ENCODE measurements at regions of chr11 and their contacts with region 1.

Region 1: DNA sequence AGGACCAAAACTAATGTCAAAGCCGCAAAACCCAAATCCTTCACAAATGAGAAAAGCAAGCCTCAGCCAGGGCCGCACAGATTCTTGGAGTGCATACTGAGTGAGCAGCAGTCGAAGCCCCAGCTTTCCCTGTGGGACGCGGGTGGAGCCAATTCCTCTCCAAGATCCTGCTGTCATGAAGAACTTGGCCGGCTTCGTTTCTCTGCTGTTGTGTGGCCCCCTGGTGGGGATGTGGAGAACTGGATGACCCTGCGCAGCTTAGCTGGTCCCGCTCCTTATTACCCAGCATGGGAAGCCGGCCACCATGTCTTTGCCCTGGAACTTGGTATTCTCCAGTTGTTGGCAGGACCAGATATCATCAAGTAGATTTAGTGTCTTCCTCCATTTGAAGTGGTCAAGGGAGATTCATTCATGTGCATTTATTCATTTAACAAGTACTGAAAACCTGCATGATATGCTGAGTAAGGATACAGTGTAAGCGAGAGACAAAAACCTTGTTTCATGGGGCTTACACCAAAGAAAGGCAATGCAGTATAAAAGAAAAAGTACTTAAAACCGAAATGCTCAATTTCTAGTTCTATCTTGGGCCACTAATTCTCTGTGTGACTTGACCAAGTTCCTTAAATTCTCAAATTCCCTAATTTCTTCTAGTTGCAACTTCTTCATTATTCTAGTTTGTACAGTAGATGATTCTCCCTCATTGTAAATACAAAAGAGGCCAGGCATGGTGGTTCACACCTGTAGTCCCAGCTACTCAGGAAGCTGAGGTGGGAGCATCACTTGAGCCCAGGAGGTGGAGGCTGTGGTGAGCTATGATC is 56.7 kb upstream of the CRTAM start:
- DNase-seq: no peak
- ATAC-seq: peak; percentile 96
- H3K4me3 ChIP-seq: no peak overlapping the region
- H3K27ac ChIP-seq: no peak overlapping the region
- H3K4me1 ChIP-seq: no peaks in the 10 kb centered on the region
- H3K27me3 ChIP-seq: no peaks in the 10 kb centered on the region; a peak in 1 of 4 replicates
- CTCF ChIP-seq: peak; percentile 84 to 91 (median 85)
- EP300 ChIP-seq: no peak
- POLR2A ChIP-seq: no peak
- RAD21 ChIP-seq: peak; percentile 87

Region 2: DNA sequence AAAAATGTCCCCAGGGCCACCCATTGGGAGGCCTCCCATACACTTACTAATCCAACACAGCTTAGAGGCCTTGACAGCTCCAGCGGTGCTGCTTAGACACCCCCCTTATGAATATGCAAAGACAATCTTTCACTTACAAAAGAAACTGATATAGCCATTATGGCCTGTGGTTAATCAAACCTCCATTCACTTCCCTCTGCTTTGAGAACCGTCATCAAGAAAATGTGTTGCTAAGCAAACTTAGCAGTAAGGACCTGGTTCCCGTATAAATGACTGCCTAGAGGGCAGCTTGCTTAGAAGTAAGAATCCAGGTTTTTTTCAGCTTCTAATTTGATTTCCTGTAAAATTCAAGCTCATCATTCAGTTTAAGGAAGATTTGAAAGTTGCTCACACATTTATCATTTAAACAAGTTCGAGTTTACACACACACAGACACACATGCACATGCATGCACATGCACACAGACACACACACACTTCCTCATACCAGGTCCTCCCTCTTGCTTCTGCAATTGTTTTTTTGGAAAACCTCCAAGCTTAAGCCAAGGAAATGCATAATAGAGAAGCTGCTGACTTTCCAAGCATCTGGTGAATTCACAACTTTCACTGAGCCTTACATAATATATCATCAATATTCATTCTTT is 527.9 kb before region 1 on chr11:
- CTCF ChIA-PET with region 1: no interaction called
- POLR2A ChIA-PET with region 1: no interaction called
- RAD21 ChIA-PET with region 1: no interaction called
- SMC1A ChIA-PET with region 1: no interaction called
- in situ Hi-C with region 1: no loop called
- intact Hi-C with region 1: no loop called
- DNase-seq: no peak
- ATAC-seq: no peak
- H3K4me3 ChIP-seq: no peak overlapping the region
- H3K27ac ChIP-seq: no peak overlapping the region
- H3K4me1 ChIP-seq: no peaks in the 10 kb centered on the region
- H3K27me3 ChIP-seq: no peaks in the 10 kb centered on the region; a peak in 1 of 4 replicates
- CTCF ChIP-seq: no peak
- EP300 ChIP-seq: no peak
- POLR2A ChIP-seq: no peak
- RAD21 ChIP-seq: no peak

Region 3: DNA sequence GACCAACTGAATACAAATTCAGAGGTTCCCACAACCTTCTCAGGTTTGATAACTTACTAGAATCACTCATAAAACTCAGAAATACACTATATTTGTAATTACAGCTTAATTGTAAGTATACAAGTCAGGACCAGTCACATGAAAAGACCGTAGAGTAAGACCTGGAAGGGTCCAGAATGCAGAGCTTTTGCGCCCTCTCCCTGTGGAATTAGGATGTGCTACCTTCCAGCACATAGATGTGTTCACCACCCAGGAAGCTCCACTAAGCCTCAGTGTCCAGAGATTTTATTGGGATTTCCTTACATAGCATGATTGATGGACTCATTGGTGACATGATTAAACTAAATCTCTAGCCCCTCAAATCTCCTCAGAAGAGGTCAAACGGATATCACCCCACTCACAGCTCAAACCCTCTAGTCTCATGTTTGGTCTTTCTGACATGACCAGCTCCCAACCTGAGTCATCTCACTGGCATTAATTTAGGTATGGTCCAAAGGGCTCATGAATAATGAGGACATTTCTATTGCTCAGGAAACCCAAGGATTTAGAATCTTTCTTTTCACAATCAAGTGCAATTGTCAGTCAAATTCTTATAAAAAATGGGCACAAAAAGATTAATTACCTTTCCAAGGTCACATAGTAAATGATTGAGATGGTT is 203.3 kb before region 1 on chr11:
- CTCF ChIA-PET with region 1: interaction called, 73 read pairs
- POLR2A ChIA-PET with region 1: no interaction called
- RAD21 ChIA-PET with region 1: interaction called, 8 read pairs
- SMC1A ChIA-PET with region 1: interaction called, 25 read pairs
- in situ Hi-C with region 1: loop called (anchors 5 kb)
- intact Hi-C with region 1: loop called (anchors 1 kb)
- DNase-seq: no peak
- ATAC-seq: no peak
- H3K4me3 ChIP-seq: no peak overlapping the region
- H3K27ac ChIP-seq: no peak overlapping the region
- H3K4me1 ChIP-seq: no peaks in the 10 kb centered on the region
- H3K27me3 ChIP-seq: no peaks in the 10 kb centered on the region
- CTCF ChIP-seq: peak in 1 of 3 experiments; percentile 16; a peak in 1 of 6 replicates
- EP300 ChIP-seq: no peak
- POLR2A ChIP-seq: no peak
- RAD21 ChIP-seq: no peak

Region 4: GRCh38 chr11:122584670-122585069 is 196.9 kb before region 1 on chr11:
- CTCF ChIA-PET with region 1: interaction called, 73 read pairs
- POLR2A ChIA-PET with region 1: no interaction called
- RAD21 ChIA-PET with region 1: interaction called, 8 read pairs
- SMC1A ChIA-PET with region 1: interaction called, 25 read pairs
- in situ Hi-C with region 1: loop called (anchors 5 kb)
- intact Hi-C with region 1: loop called (anchors 1 kb)
- DNase-seq: no peak
- ATAC-seq: no peak
- H3K4me3 ChIP-seq: no peak overlapping the region
- H3K27ac ChIP-seq: no peak overlapping the region
- H3K4me1 ChIP-seq: no peaks in the 10 kb centered on the region
- H3K27me3 ChIP-seq: no peaks in the 10 kb centered on the region
- CTCF ChIP-seq: no peak
- EP300 ChIP-seq: no peak
- POLR2A ChIP-seq: no peak
- RAD21 ChIP-seq: no peak

Region 5: DNA sequence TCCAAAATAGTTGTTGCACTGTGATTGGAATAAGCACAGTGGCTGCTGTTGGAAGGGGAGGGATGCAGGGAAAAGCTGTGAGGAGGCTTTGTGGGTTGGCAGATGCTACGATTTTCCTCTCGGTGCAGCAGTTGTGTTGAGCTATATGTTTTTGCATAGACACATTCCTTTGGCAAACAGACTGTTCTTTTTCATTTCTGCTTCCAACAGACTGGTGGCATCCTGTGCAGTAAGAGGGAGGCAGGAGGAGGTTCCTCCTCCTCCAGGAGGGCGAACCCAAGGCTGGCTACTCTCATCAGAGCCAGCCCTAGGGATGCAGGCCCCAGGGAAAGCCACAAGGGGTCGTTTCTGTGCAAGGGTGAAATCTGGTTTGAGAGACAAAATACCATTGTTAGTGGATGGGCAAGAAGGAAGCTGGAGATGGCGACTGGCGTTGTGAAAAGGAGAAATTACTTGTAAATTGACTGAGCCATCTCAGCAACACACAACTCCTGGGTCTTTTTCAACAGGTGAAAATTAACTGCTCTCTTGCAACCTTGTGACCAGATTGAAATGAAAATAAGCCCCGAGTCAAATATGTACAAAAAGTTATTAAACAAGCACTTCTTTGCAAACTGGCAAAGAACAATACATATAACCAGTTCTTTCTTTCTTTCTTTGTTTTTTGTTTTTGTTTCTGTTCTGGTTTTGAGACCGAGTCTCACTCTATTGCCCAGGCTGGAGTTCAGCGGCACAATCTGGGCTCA is 152.6 kb before region 1 on chr11:
- CTCF ChIA-PET with region 1: interaction called, 78 read pairs
- POLR2A ChIA-PET with region 1: no interaction called
- RAD21 ChIA-PET with region 1: interaction called, 14 read pairs
- SMC1A ChIA-PET with region 1: interaction called, 28 read pairs
- in situ Hi-C with region 1: loop called (anchors 5 kb)
- intact Hi-C with region 1: loop called (anchors 1 kb)
- DNase-seq: no peak
- ATAC-seq: peak; percentile 95
- H3K4me3 ChIP-seq: no peak overlapping the region
- H3K27ac ChIP-seq: no peak overlapping the region
- H3K4me1 ChIP-seq: no peaks in the 10 kb centered on the region
- H3K27me3 ChIP-seq: no peaks in the 10 kb centered on the region; a peak in 2 of 4 replicates
- CTCF ChIP-seq: peak; percentile 76 to 81 (median 80)
- EP300 ChIP-seq: no peak
- POLR2A ChIP-seq: no peak
- RAD21 ChIP-seq: peak; percentile 84

Region 6: GRCh38 chr11:122655527-122656072 is 126.0 kb before region 1 on chr11 and contains the start of gene UBASH3B:
- CTCF ChIA-PET with region 1: interaction called, 12 read pairs
- POLR2A ChIA-PET with region 1: no interaction called
- RAD21 ChIA-PET with region 1: no interaction called
- SMC1A ChIA-PET with region 1: no interaction called
- in situ Hi-C with region 1: no loop called
- intact Hi-C with region 1: no loop called
- DNase-seq: no peak
- ATAC-seq: peak; percentile 93
- H3K4me3 ChIP-seq: peak within 1 kb of the TSS; percentile 82
- H3K27ac ChIP-seq: no peak within 1 kb of the TSS
- H3K4me1 ChIP-seq: peaks cover 6% of the 10 kb centered on the region
- H3K27me3 ChIP-seq: peaks cover 6 to 20% of the 10 kb centered on the region in 2 experiments
- CTCF ChIP-seq: no peak
- EP300 ChIP-seq: no peak
- POLR2A ChIP-seq: no peak
- RAD21 ChIP-seq: no peak
- polyA plus RNA-seq, gene UBASH3B: 0.18 TPM

Region 7: DNA sequence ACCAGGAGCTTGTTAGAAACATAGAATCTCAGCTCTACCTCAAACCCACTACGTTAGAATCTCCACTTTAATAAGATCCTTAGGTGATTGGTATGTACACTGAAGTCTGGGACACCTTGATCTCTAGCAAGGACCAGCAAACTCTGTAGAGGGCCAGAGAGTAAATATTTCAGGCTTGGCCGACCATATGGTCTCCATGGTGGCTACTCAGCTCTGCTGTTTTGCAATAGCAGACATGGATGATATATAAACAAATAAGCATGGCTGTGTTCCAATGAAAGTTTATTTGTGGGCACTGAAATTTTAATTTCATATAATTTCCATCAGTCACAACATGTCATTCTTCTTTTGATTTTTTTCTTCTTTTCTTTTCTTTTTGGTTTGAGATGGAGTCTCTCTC is 102.1 kb before region 1 on chr11:
- CTCF ChIA-PET with region 1: no interaction called
- POLR2A ChIA-PET with region 1: no interaction called
- RAD21 ChIA-PET with region 1: no interaction called
- SMC1A ChIA-PET with region 1: no interaction called
- in situ Hi-C with region 1: no loop called
- intact Hi-C with region 1: no loop called
- DNase-seq: no peak
- ATAC-seq: no peak
- H3K4me3 ChIP-seq: no peak overlapping the region
- H3K27ac ChIP-seq: no peak overlapping the region
- H3K4me1 ChIP-seq: no peaks in the 10 kb centered on the region
- H3K27me3 ChIP-seq: peaks cover 0 to 3% of the 10 kb centered on the region in 2 experiments; a peak in 3 of 4 replicates
- CTCF ChIP-seq: no peak
- EP300 ChIP-seq: no peak
- POLR2A ChIP-seq: no peak
- RAD21 ChIP-seq: no peak

Region 8: DNA sequence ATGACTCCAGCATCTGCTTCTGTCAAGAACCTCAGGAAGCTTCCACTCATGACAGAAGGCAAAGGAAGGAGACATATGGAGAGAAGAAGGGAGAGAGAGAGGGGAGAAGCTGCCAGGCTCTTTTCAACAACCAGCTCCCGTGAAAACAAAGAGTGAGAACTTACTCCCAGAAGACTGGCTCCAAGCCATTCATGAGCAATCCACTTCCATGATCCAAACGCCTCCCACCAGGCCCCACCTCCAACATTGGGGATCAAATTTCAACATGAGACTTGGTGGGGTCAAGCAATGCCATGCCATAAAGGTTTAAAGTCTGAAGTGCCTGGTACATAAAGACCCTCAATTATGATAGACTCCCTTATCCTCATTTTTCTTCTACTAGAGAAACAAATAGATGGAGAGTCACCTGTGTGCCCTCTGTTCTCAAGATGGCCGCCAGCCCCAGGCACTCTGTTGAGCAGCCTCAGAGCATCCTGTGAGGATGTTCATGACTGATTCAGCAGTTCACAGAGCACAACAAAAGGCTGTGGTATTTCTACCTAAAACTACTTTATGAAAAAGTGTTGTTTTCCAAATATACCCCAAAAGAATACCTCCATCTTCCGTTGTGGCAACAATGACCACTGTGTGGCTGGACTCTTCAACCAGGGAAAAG is 12.3 kb before region 1 on chr11:
- CTCF ChIA-PET with region 1: interaction called, 27 read pairs
- POLR2A ChIA-PET with region 1: no interaction called
- RAD21 ChIA-PET with region 1: no interaction called
- SMC1A ChIA-PET with region 1: interaction called, 7 read pairs
- in situ Hi-C with region 1: no loop called
- intact Hi-C with region 1: no loop called
- DNase-seq: no peak
- ATAC-seq: no peak
- H3K4me3 ChIP-seq: no peak overlapping the region
- H3K27ac ChIP-seq: no peak overlapping the region
- H3K4me1 ChIP-seq: no peaks in the 10 kb centered on the region
- H3K27me3 ChIP-seq: peaks cover 4 to 10% of the 10 kb centered on the region in 2 experiments
- CTCF ChIP-seq: no peak
- EP300 ChIP-seq: no peak
- POLR2A ChIP-seq: no peak
- RAD21 ChIP-seq: no peak

Region 9: DNA sequence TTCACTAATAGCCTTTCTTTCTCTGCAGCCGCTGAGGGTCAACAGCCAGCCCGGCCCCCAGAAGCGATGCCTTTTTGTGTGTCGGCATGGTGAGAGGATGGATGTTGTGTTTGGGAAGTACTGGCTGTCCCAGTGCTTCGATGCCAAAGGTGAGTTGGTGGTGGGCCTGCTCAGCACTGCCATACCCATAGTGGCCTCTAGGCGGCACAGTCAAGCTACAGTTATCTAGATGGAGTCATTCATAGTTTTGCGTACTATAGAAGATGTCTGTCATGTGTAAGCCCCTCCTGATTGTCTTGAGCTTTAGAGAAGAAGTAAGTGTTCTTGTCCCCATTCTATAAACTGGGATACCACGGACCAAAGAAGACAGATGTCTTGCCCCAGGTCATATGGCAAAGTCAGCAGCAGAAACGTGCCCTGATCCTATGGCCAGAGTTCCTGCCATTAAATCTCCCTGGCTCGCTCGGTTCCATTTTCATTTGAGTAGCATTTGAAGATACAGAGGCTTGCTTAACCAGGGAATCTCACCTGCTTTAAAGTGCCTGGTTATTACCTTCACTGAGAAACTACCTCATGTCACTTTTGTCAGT is 14.6 kb after region 1 on chr11:
- CTCF ChIA-PET with region 1: interaction called, 16 read pairs
- POLR2A ChIA-PET with region 1: no interaction called
- RAD21 ChIA-PET with region 1: interaction called, 4 read pairs
- SMC1A ChIA-PET with region 1: interaction called, 6 read pairs
- in situ Hi-C with region 1: no loop called
- intact Hi-C with region 1: no loop called
- DNase-seq: no peak
- ATAC-seq: peak; percentile 98
- H3K4me3 ChIP-seq: no peak overlapping the region
- H3K27ac ChIP-seq: no peak overlapping the region
- H3K4me1 ChIP-seq: no peaks in the 10 kb centered on the region
- H3K27me3 ChIP-seq: no peaks in the 10 kb centered on the region
- CTCF ChIP-seq: peak; percentile 92 to 96 (median 93)
- EP300 ChIP-seq: no peak
- POLR2A ChIP-seq: no peak
- RAD21 ChIP-seq: peak; percentile 92

Region 10: GRCh38 chr11:123098990-123099389 is 317.4 kb after region 1 on chr11:
- CTCF ChIA-PET with region 1: no interaction called
- POLR2A ChIA-PET with region 1: no interaction called
- RAD21 ChIA-PET with region 1: no interaction called
- SMC1A ChIA-PET with region 1: no interaction called
- in situ Hi-C with region 1: no loop called
- intact Hi-C with region 1: no loop called
- DNase-seq: no peak
- ATAC-seq: no peak
- H3K4me3 ChIP-seq: no peak overlapping the region
- H3K27ac ChIP-seq: no peak overlapping the region
- H3K4me1 ChIP-seq: no peaks in the 10 kb centered on the region
- H3K27me3 ChIP-seq: peaks cover 0 to 2% of the 10 kb centered on the region in 2 experiments; a peak in 1 of 4 replicates
- CTCF ChIP-seq: no peak
- EP300 ChIP-seq: no peak
- POLR2A ChIP-seq: no peak
- RAD21 ChIP-seq: no peak

Region 11: GRCh38 chr11:124415356-124415923 is 1633.9 kb after region 1 on chr11:
- CTCF ChIA-PET with region 1: no interaction called
- POLR2A ChIA-PET with region 1: no interaction called
- RAD21 ChIA-PET with region 1: no interaction called
- SMC1A ChIA-PET with region 1: no interaction called
- in situ Hi-C with region 1: no loop called
- intact Hi-C with region 1: no loop called
- DNase-seq: no peak
- ATAC-seq: no peak
- H3K4me3 ChIP-seq: no peak overlapping the region
- H3K27ac ChIP-seq: no peak overlapping the region
- H3K4me1 ChIP-seq: no peaks in the 10 kb centered on the region
- H3K27me3 ChIP-seq: no peaks in the 10 kb centered on the region
- CTCF ChIP-seq: peak; percentile 54 to 70 (median 66)
- EP300 ChIP-seq: no peak
- POLR2A ChIP-seq: no peak
- RAD21 ChIP-seq: peak; percentile 76